ENCODE measurements at regions of chr11 and their contacts with region 1.

Region 1: DNA sequence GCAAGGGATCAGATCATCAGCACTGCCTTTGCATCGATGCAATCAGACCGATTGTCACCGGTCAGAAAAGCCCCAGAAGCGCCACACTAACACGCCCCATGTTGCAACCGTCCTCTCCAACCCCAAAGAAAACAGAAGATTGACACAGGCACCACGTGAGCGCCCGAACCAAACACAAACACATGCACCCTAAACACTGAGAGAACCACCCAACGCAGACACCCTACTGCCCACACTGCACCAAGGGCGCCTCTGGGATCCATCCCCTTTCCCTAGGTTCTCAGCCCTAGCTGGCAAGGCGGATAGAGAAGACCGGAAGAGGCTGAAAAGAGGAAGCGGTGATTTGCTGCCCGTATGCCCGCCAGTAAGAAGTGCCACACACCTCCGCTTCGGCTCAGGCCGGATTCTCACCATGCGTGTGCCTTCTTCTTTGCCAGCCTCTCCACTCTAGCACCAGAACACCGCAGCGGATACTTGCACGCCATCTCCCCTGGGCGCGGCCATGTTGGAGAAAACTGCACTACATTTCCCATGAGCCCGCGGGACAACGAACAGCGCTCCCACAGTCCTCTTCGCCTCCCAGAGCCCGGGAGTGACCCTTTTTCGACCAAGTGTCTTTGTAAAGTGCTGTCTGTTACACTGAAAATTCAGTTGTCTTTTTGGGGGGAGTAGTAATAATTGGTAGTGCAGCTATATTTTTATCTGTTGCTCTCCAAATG is at the start of gene ALKBH8:
- DNase-seq: peak; percentile 50 to 77 (median 75)
- ATAC-seq: peak; percentile 96
- H3K4me3 ChIP-seq: peak within 1 kb of the TSS; percentile 98
- H3K4me3 Mint-ChIP-seq: peak within 1 kb of the TSS; percentile 87 to 98 (median 94)
- H3K27ac ChIP-seq: peak within 1 kb of the TSS; percentile 73
- H3K27ac Mint-ChIP-seq: peak within 1 kb of the TSS; percentile 87 to 97 (median 90)
- H3K4me1 ChIP-seq: peaks cover 8 to 20% of the 10 kb centered on the region in 2 donors
- H3K4me1 Mint-ChIP-seq: peaks cover 28 to 70% (median 58%) of the 10 kb centered on the region in 7 donors
- H3K27me3 ChIP-seq: no peaks in the 10 kb centered on the region
- H3K27me3 Mint-ChIP-seq: peaks cover 0 to 3% (median 0%) of the 10 kb centered on the region in 5 donors
- total RNA-seq, gene ALKBH8: 9.5 to 19.1 (median 12.6) TPM

Region 2: GRCh38 chr11:106021967-106022794 is 1543.2 kb before region 1 on chr11 and contains the start of gene MSANTD4:
- CTCF ChIA-PET with region 1: no interaction called
- POLR2A ChIA-PET with region 1: no interaction called
- intact Hi-C with region 1: loop called (anchors 5 kb)
- DNase-seq: peak; percentile 89 to 97 (median 95)
- ATAC-seq: peak; percentile 98
- H3K4me3 ChIP-seq: peak within 1 kb of the TSS; percentile 82
- H3K4me3 Mint-ChIP-seq: peak within 1 kb of the TSS; percentile 91 to 99 (median 94)
- H3K27ac ChIP-seq: peak within 1 kb of the TSS; percentile 66
- H3K27ac Mint-ChIP-seq: peak within 1 kb of the TSS; percentile 82 to 96 (median 89)
- H3K4me1 ChIP-seq: peaks cover 10 to 20% of the 10 kb centered on the region in 2 donors
- H3K4me1 Mint-ChIP-seq: peaks cover 34 to 60% (median 49%) of the 10 kb centered on the region in 7 donors
- H3K27me3 ChIP-seq: no peaks in the 10 kb centered on the region
- H3K27me3 Mint-ChIP-seq: peaks cover 0 to 13% (median 6%) of the 10 kb centered on the region in 5 donors
- total RNA-seq, gene MSANTD4: 4.7 to 18.7 (median 15.3) TPM

Region 3: GRCh38 chr11:107526197-107526596 is 39.2 kb before region 1 on chr11:
- CTCF ChIA-PET with region 1: no interaction called
- POLR2A ChIA-PET with region 1: no interaction called
- intact Hi-C with region 1: no loop called
- DNase-seq: no peak
- ATAC-seq: no peak
- H3K4me3 ChIP-seq: no peak overlapping the region
- H3K4me3 Mint-ChIP-seq: no peak overlapping the region
- H3K27ac ChIP-seq: no peak overlapping the region
- H3K27ac Mint-ChIP-seq: no peak overlapping the region
- H3K4me1 ChIP-seq: no peaks in the 10 kb centered on the region
- H3K4me1 Mint-ChIP-seq: no peaks in the 10 kb centered on the region
- H3K27me3 ChIP-seq: no peaks in the 10 kb centered on the region
- H3K27me3 Mint-ChIP-seq: no peaks in the 10 kb centered on the region

Region 4: GRCh38 chr11:107549253-107549953 is 16.0 kb before region 1 on chr11:
- CTCF ChIA-PET with region 1: interaction called, 11 read pairs
- POLR2A ChIA-PET with region 1: interaction called, 3 read pairs
- intact Hi-C with region 1: loop called (anchors 1 kb)
- DNase-seq: peak in 7 of 9 donors; percentile 7 to 46 (median 37)
- ATAC-seq: peak; percentile 70
- H3K4me3 ChIP-seq: no peak overlapping the region
- H3K4me3 Mint-ChIP-seq: no peak overlapping the region
- H3K27ac ChIP-seq: no peak overlapping the region
- H3K27ac Mint-ChIP-seq: no peak overlapping the region
- H3K4me1 ChIP-seq: no peaks in the 10 kb centered on the region
- H3K4me1 Mint-ChIP-seq: peaks cover 0 to 5% (median 0%) of the 10 kb centered on the region in 7 donors
- H3K27me3 ChIP-seq: no peaks in the 10 kb centered on the region
- H3K27me3 Mint-ChIP-seq: no peaks in the 10 kb centered on the region

Region 5: DNA sequence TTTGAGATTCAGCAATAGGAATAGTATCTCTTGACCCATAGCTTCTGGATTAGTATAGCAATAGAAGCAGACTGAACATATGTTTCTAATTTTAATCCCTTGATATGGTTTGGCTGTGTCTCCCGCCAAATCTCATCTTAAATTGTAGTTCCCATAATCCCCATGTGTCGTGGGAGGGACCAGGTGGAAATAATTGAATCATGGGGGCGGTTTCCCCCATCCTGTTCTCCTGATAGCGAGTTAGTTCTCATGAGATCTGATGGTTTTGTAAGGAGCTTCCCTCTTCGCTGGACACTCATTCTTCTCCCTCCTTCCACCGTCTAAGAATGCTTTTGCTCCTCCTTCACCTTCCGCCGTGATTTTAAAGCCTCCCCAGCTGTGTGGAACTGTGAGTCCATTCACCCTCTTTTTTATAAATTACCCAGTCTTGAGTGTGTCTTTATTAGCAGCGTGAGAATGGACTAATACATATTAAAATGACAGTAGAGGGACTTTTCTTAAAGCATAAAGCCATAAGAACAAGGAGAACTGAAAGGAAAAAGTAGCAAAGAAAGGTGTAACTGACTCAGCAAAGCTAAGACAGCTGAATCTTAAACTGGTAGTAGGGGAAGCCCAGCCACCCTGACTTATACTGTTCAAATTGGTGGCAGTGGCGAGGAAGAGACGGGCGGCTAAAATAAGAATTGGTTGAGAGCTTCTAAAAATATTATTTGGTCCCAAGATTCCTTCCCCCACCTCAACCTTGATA is 166.7 kb after region 1 on chr11:
- CTCF ChIA-PET with region 1: no interaction called
- POLR2A ChIA-PET with region 1: no interaction called
- intact Hi-C with region 1: no loop called
- DNase-seq: no peak
- ATAC-seq: no peak
- H3K4me3 ChIP-seq: no peak overlapping the region
- H3K4me3 Mint-ChIP-seq: no peak overlapping the region
- H3K27ac ChIP-seq: no peak overlapping the region
- H3K27ac Mint-ChIP-seq: no peak overlapping the region
- H3K4me1 ChIP-seq: no peaks in the 10 kb centered on the region
- H3K4me1 Mint-ChIP-seq: no peaks in the 10 kb centered on the region
- H3K27me3 ChIP-seq: no peaks in the 10 kb centered on the region
- H3K27me3 Mint-ChIP-seq: peaks cover 19 to 41% (median 25%) of the 10 kb centered on the region in 5 donors

Region 6: DNA sequence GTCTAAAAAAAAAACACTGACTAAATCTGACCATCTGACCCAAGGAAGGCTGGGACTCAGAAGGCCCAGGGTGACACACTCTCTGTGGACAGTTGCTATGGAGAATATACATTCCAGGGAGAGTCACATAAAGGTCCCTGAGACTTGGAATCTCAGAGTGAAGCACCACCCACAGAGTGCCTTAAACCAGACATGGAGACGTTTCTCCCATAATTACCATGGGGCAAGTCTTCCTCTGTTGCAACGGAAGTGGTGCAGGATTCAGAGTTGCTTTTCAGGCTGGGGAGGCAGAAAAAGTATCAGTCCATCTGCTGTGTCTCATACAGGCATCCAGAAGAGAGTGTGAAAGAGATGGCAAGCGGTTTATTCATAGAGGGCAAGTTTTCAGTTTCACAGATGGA is 205.2 kb after region 1 on chr11:
- CTCF ChIA-PET with region 1: interaction called, 4 read pairs
- POLR2A ChIA-PET with region 1: no interaction called
- intact Hi-C with region 1: loop called (anchors 1 to 5 kb)
- DNase-seq: no peak
- ATAC-seq: no peak
- H3K4me3 ChIP-seq: no peak overlapping the region
- H3K4me3 Mint-ChIP-seq: no peak overlapping the region
- H3K27ac ChIP-seq: no peak overlapping the region
- H3K27ac Mint-ChIP-seq: no peak overlapping the region
- H3K4me1 ChIP-seq: no peaks in the 10 kb centered on the region
- H3K4me1 Mint-ChIP-seq: peaks cover 0 to 2% (median 0%) of the 10 kb centered on the region in 7 donors
- H3K27me3 ChIP-seq: no peaks in the 10 kb centered on the region
- H3K27me3 Mint-ChIP-seq: peaks cover 0 to 16% (median 10%) of the 10 kb centered on the region in 5 donors

Region 7: GRCh38 chr11:107928046-107928766 is 362.8 kb after region 1 on chr11 and contains the start of gene RAB39A:
- CTCF ChIA-PET with region 1: no interaction called
- POLR2A ChIA-PET with region 1: no interaction called
- intact Hi-C with region 1: loop called in 1 of 2 experiments (anchors 10 kb)
- DNase-seq: peak in 8 of 9 donors; percentile 25 to 73 (median 35)
- ATAC-seq: peak; percentile 92
- H3K4me3 ChIP-seq: no peak within 1 kb of the TSS
- H3K4me3 Mint-ChIP-seq: peak within 1 kb of the TSS; percentile 22 to 84 (median 67)
- H3K27ac ChIP-seq: no peak within 1 kb of the TSS
- H3K27ac Mint-ChIP-seq: peak within 1 kb of the TSS in 1 of 9 donors; percentile 33
- H3K4me1 ChIP-seq: peaks cover 6 to 7% of the 10 kb centered on the region in 2 donors
- H3K4me1 Mint-ChIP-seq: peaks cover 5 to 15% (median 11%) of the 10 kb centered on the region in 7 donors
- H3K27me3 ChIP-seq: peaks cover 0 to 15% of the 10 kb centered on the region in 2 donors
- H3K27me3 Mint-ChIP-seq: peaks cover 36 to 62% (median 52%) of the 10 kb centered on the region in 5 donors
- total RNA-seq, gene RAB39A: 0.38 to 1.6 TPM in 2 of 5 experiments, not detected in the others

Region 8: DNA sequence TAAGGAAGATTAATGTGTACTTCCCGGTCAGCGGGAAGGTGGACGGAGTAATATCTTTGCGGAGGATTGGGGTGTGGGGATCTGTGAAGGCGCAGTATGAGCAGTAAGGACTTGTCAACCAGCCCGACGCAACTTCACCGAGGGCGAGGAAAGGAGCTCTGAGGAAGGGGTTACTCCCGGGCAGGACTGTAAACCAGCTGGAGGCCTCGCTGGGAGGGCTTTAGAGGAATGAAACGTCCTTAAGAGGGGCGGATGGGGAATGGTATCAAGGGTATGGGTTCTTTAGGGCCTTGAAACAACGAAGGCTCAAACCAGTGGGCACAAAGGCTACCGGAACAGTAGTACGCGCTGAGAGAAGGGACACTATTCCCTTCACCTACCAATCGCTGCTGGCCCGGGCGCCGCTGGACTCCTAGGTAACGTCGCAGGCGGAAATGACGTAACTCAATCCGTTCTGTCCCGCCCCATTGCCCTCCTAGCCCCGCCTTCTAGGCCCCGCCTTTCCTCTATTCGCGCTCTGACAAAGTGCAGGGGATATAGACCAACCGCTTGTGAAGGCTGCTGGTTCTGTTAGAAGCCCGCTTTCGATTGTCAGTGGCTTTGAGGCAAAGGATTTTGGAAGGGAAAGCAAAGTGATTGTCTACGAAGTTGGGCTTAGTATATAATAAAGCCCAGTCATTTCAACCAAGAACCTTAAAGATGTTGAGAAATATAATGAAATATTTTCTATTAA is 901.9 kb after region 1 on chr11 and contains the start of gene C11orf65:
- CTCF ChIA-PET with region 1: no interaction called
- POLR2A ChIA-PET with region 1: no interaction called
- intact Hi-C with region 1: loop called (anchors 10 kb)
- DNase-seq: peak; percentile 88 to 97 (median 94)
- ATAC-seq: peak; percentile 98
- H3K4me3 ChIP-seq: peak within 1 kb of the TSS; percentile 81
- H3K4me3 Mint-ChIP-seq: peak within 1 kb of the TSS; percentile 93 to 100 (median 98)
- H3K27ac ChIP-seq: peak within 1 kb of the TSS; percentile 93
- H3K27ac Mint-ChIP-seq: peak within 1 kb of the TSS; percentile 98 to 100 (median 100)
- H3K4me1 ChIP-seq: peaks cover 3 to 5% of the 10 kb centered on the region in 2 donors
- H3K4me1 Mint-ChIP-seq: peaks cover 0 to 27% (median 17%) of the 10 kb centered on the region in 7 donors
- H3K27me3 ChIP-seq: no peaks in the 10 kb centered on the region
- H3K27me3 Mint-ChIP-seq: no peaks in the 10 kb centered on the region
- total RNA-seq, gene C11orf65: 0.27 to 1.5 (median 0.51) TPM

Region 9: DNA sequence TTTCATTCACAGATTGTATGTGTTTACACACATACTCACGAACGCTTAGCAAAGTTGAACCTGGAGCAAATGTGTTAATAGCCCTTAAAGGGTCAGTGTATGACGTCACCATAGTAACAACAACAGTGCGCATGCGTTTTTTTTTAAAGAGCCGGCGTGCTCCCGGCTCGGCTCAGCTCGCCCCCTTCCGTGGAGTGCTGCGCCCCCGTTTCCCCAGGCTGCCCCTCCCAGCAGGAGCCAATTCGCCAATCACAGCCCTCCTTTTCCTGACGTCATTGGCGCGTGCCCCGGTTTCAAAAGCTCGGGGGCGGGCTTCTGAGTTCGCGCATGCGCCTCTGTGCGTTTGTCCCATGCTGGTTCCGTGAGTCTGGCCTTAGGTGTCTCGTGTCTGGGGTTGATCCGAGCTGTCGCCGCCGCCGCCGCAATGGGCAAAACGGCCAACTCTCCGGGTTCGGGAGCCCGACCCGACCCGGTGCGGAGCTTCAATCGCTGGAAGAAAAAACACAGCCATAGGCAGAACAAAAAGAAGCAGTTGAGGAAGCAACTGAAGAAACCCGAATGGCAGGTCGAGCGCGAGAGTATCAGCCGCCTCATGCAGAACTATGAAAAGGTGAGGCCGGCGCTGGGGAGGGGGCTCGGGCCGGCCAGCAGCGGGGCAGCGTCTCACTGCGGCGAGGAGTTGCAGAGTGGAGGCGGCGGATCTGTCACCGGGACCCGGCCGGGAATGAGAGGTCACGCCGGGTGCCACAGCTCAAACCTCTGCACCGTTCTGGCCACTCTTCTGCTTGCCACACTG is 1099.5 kb after region 1 on chr11 and contains the start of gene DDX10:
- CTCF ChIA-PET with region 1: no interaction called
- POLR2A ChIA-PET with region 1: no interaction called
- intact Hi-C with region 1: loop called (anchors 2 to 5 kb)
- DNase-seq: peak; percentile 95 to 99 (median 98)
- ATAC-seq: peak; percentile 99
- H3K4me3 ChIP-seq: peak within 1 kb of the TSS; percentile 80
- H3K4me3 Mint-ChIP-seq: peak within 1 kb of the TSS; percentile 91 to 100 (median 100)
- H3K27ac ChIP-seq: peak within 1 kb of the TSS; percentile 77
- H3K27ac Mint-ChIP-seq: peak within 1 kb of the TSS; percentile 79 to 100 (median 97)
- H3K4me1 ChIP-seq: peaks cover 18 to 22% of the 10 kb centered on the region in 2 donors
- H3K4me1 Mint-ChIP-seq: peaks cover 24 to 56% (median 47%) of the 10 kb centered on the region in 7 donors
- H3K27me3 ChIP-seq: no peaks in the 10 kb centered on the region
- H3K27me3 Mint-ChIP-seq: peaks cover 0 to 9% (median 0%) of the 10 kb centered on the region in 5 donors
- total RNA-seq, gene DDX10: 16.7 to 34.6 (median 22.8) TPM